ENCODE measurements at regions of chr12 and their contacts with region 1.

Region 1: GRCh38 chr12:58540480-58541299 is 379.6 kb downstream of the LRIG3 start:
- DNase-seq: peak; percentile 81
- ATAC-seq: peak; percentile 96

Region 2: DNA sequence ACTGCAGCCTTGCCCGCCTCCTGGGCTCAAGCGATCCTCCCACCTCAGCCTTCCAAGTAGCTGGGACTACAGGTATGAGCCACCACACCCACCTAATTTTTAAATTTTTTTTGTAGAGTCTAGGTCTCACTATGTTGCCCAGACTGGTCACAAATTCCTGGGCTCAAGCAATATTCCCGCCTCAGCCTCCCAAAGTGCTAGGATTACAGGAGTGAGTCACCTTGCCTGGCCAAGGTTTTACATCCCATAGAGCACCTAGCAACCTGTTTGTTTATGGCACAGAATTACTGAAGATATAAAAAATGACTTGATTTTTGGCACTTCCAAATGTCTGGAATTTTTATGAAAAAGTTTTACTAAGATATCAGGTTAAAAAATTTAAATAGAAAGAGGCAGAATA is 1507.3 kb before region 1 on chr12:
- intact Hi-C with region 1: no loop called
- DNase-seq: no peak
- ATAC-seq: no peak

Region 3: GRCh38 chr12:58346032-58346632 is 194.6 kb before region 1 on chr12:
- intact Hi-C with region 1: loop called (anchors 5 kb)
- DNase-seq: no peak
- ATAC-seq: peak; percentile 30